Activated CD8-positive, alpha-beta memory T cell treated with anti-CD3 and anti-CD28 coated beads, Interleukin-2, amount 10 ng/mL, durations not matched to agents 7 days and 5 days (primary cell): ENCODE measurements at regions of chr2 and their contacts with region 1.

Region 1: DNA sequence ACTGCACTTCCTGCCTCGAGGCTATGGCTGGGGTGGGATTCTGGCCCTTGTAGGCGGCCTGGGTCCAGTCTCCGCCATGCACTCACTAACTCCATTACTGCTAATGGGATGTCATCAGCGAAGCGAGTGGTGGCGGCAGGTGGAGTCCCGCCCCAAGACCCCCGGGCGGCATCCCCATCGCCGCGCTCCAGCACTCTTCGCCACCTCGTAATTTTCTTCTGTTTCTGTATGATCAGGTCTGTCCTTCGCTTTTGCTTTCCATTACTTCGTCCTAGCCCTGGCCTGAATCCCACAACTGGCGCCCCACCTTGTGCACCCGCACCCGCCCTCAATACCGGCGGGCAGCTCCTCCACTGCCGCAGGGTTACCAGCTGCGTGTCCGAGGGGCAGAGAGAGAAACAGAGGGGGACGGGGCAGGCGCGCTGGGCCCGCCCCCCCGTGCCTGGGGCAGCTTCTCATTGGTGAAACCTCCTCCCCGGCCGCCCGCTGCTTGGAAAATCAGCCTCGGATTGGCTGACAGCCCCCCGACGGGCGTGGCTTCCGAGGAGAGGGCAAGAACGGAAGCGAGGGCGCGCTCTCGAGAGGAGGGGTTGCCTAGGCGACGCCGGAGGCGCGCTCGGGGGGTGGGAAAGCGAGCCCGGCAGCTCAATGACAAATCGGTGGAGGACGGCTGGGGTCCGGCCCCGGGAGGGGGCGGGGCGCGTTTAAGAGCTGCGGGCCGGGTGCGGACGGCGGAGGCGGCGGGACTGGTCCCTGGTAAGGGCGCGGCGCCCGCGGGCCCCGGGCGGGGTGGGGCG is at the start of gene RALB:
- DNase-seq: peak; percentile 99
- ATAC-seq: peak; percentile 96
- H3K4me3 Mint-ChIP-seq: peak within 1 kb of the TSS; percentile 98
- H3K27ac Mint-ChIP-seq: peak within 1 kb of the TSS; percentile 92
- H3K4me1 Mint-ChIP-seq: peaks cover 59% of the 10 kb centered on the region
- H3K27me3 Mint-ChIP-seq: peaks cover 17% of the 10 kb centered on the region
- total RNA-seq, gene RALB: 36.7 to 41.8 TPM

Region 2: GRCh38 chr2:120231974-120232635 is 20.3 kb before region 1 on chr2:
- CTCF ChIA-PET with region 1: interaction called, 24 read pairs
- DNase-seq: peak; percentile 93
- ATAC-seq: peak; percentile 93
- H3K4me3 Mint-ChIP-seq: peak overlapping the region; percentile 97
- H3K27ac Mint-ChIP-seq: peak overlapping the region; percentile 98
- H3K4me1 Mint-ChIP-seq: peaks cover 48% of the 10 kb centered on the region
- H3K27me3 Mint-ChIP-seq: no peaks in the 10 kb centered on the region